ENCODE measurements at regions of chr17 and their contacts with region 1.

Region 1: DNA sequence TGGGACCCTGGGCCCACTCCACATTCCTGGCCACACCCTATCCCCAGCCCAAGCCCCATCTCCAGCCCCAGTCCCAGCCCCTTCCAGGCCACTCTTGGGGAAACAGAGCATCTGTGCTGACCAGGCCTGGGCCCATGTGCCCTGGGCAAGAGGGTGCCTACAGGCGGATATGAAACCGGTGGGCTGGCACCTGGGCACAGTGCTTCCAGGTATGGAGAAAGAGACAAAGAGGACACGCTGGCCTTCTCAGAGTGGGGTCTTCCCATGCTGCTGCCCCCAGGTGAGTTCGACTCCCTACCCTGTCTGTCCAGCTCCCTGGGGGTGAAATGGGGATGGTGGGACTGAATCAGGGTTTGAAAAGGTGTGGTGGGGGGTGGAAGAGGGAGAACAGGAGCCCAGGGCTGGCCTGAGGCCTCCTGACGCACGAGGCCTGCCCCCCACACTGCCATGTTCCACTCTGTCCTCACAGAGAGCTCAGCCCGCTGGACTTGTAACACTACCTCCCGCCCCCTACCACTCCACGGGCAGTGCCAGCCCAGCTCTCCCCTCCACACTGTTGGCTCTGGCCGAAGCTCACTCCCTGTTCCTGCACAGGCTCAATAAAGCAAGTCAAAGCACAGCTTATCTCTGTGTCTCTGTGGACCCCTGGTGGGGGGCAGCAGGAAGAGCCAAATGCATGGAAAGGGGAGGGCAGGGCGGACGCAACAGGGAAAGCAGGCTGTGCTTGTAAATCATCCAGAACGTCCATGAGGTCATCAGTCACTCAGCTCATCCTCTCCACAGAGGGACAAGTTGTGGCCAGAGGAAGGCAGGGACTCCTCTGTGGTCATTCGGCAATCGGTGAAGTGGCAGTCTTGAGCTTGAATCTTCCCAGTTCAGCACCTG is 71.1 kb upstream of the TMEM97 start:
- DNase-seq: no peak
- H3K4me3 ChIP-seq: no peak overlapping the region
- H3K27ac ChIP-seq: no peak overlapping the region
- H3K4me1 ChIP-seq: peaks cover 8 to 13% (median 11%) of the 10 kb centered on the region in 4 donors
- H3K27me3 ChIP-seq: peaks cover 0 to 26% (median 3%) of the 10 kb centered on the region in 3 donors
- CTCF ChIP-seq: no peak
- EP300 ChIP-seq: no peak
- POLR2A ChIP-seq: no peak

Region 2: DNA sequence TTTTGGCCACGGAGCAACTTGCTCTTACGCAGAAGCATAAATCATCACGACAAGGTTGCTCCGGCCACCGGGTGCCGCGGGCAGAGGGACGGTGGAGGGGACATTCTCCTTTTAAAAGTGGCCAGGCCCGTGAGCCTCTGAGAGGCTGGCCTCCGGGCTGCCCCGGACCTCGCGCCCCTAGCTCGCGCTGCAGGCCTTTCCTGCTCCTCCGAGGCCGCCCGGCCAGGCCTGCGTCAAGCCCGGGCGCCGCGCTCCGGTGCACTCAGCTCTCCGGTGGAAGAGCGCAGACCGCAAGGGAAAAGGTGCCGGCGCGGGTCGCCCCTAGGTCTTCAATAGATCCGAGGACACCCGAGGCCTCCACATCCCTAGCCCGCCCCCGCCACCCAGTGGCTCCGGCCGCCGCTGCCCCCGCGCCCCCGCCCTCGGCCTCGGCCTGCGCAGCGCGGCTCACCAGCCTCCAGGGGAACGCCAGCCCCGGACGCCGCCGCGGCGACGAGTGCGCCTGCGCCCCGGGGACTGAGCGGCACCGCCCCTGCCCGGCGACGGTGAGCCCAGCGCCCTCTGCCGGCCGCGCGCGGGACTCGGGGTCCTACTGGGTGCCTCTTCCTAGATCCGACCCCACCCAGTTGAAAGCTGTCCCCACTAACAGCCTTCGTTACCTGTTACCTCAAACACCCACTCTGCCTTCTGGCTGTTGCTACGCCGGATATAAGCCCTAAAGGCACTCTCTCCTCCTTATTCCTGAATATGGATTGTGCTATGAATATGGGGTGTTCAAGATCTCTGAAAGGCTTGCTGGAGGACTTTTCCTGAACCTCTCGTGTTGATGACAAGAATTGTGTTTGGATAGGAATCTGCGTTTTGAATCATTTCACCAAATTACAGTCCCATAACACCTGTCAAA is 354.8 kb before region 1 on chr17 and contains the start of gene LYRM9:
- intact Hi-C with region 1: loop called (anchors 10 kb)
- DNase-seq: peak; percentile 94 to 98
- H3K4me3 ChIP-seq: peak within 1 kb of the TSS; percentile 63 to 81 (median 70)
- H3K27ac ChIP-seq: peak within 1 kb of the TSS; percentile 78 to 90 (median 87)
- H3K4me1 ChIP-seq: peaks cover 6 to 30% (median 15%) of the 10 kb centered on the region in 4 donors
- H3K27me3 ChIP-seq: no peaks in the 10 kb centered on the region
- CTCF ChIP-seq: peak in 5 of 7 experiments; percentile 61 to 94 (median 85)
- EP300 ChIP-seq: no peak
- POLR2A ChIP-seq: no peak
- total RNA-seq, gene LYRM9: 0.58 to 20.3 (median 11.6) TPM

Measured in stomach (tissue), 19 donors.